Activated naive CD8-positive, alpha-beta T cell treated with anti-CD3 and anti-CD28 coated beads, Interleukin-2, amount 10 ng/mL, durations not matched to agents 7 days and 5 days (primary cell): ENCODE measurements at regions of chr6 and their contacts with region 1.

Region 1: GRCh38 chr6:43383021-43383667 is 13.7 kb upstream of the ZNF318 start:
- DNase-seq: no peak
- ATAC-seq: no peak
- H3K4me3 Mint-ChIP-seq: peak overlapping the region; percentile 68
- H3K27ac Mint-ChIP-seq: peak overlapping the region; percentile 90
- H3K4me1 Mint-ChIP-seq: peaks cover 39% of the 10 kb centered on the region
- H3K27me3 Mint-ChIP-seq: peaks cover 65% of the 10 kb centered on the region

Region 2: DNA sequence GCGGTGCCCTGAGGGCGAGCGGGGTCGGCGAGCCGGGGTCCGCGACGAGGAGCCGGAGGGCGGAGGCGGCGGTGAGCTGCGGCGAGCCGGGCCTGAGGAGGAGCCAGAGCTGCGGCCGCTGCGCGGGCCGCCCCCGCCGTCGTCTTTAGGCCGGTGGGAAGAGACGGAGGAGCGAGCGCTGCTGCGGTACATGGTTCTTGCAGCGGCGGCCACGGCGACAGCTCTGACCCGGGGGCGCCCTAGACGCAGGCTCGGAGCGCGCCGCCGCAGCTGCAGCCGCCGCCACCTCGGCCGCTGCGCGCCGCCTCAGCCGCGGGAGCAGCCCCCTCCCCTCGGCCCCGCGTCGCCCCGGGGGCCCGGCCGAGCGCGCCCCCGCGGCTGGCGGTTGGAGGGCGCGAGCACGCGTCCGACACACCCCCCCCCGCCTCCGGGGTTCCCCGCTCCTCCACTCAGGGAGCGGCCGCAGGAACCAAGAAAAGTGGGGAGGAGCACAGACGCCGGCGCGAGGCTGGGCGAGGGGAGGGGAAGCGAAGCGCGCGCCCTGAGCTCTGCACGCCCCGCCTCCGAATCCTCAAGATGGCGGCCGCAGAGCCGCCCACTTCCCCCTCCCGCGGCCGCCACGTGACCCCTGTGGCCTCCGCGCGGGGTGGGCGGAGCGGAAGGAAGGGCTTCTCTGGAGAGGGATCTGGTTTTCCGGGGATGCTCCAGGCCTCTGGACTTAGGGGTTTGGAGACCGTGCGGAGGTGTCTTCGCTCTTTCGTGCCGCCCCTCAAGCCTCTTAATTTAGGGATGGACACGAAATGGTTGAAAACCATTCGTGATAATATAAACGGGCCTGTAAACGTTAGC is 13.7 kb before region 1 on chr6 and contains the start of gene ZNF318:
- POLR2A ChIA-PET with region 1: interaction called, 56 read pairs
- DNase-seq: peak; percentile 95
- ATAC-seq: peak; percentile 96
- H3K4me3 Mint-ChIP-seq: peak within 1 kb of the TSS; percentile 88
- H3K27ac Mint-ChIP-seq: peak within 1 kb of the TSS; percentile 89
- H3K4me1 Mint-ChIP-seq: peaks cover 23% of the 10 kb centered on the region
- H3K27me3 Mint-ChIP-seq: peaks cover 3% of the 10 kb centered on the region
- total RNA-seq, gene ZNF318: 17.0 to 18.2 TPM

Region 3: GRCh38 chr6:43496370-43497128 is 113.4 kb after region 1 on chr6:
- POLR2A ChIA-PET with region 1: no interaction called
- DNase-seq: no peak
- ATAC-seq: no peak
- H3K4me3 Mint-ChIP-seq: no peak overlapping the region
- H3K27ac Mint-ChIP-seq: no peak overlapping the region
- H3K4me1 Mint-ChIP-seq: peaks cover 7% of the 10 kb centered on the region
- H3K27me3 Mint-ChIP-seq: no peaks in the 10 kb centered on the region